PC-3 (cell line): ENCODE measurements at regions of chr9 and their contacts with region 1.

Region 1: DNA sequence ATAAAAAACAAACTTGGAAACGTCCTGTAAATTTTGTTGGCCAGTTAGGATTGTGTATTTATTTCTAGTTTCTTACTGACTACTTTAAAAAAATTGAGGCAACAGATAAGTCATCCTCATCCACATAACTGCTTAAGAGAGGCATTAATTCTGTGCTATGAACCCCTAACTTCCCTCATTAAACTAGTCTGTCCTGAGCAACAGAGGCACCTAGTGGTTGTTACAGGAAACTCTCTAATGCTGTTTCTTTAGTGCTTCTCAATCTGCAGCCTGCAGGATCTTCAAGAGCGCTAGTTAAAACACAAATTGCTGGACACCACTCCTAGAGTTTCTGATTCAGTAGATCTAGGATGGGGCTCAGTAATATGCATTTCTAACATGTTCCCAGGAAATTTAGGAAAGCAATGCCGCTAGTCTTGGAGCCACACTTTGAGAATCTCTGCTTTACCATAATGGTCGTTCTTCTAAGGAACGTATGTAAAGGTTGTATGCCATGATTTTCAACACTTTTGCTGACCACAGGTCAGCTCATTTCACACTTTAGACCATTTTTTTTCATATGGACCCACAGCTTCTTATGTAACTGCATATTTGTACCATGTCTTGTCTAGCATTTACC is 410.1 kb upstream of the SMARCA2 start:
- DNase-seq: peak; percentile 51
- ATAC-seq: no peak; the same call in 1 of the 2 replicates
- H3K4me3 ChIP-seq: no peak overlapping the region
- H3K27ac ChIP-seq: no peak overlapping the region
- H3K4me1 ChIP-seq: no peaks in the 10 kb centered on the region
- H3K27me3 ChIP-seq: no peaks in the 10 kb centered on the region
- CTCF ChIP-seq: peak; percentile 71

Region 2: GRCh38 chr9:1443450-1443849 is 161.6 kb before region 1 on chr9:
- CTCF ChIA-PET with region 1: no interaction called
- POLR2A ChIA-PET with region 1: no interaction called
- intact Hi-C with region 1: no loop called
- DNase-seq: no peak
- ATAC-seq: no peak
- H3K4me3 ChIP-seq: no peak overlapping the region
- H3K27ac ChIP-seq: no peak overlapping the region
- H3K4me1 ChIP-seq: no peaks in the 10 kb centered on the region
- H3K27me3 ChIP-seq: no peaks in the 10 kb centered on the region
- CTCF ChIP-seq: no peak

Region 3: GRCh38 chr9:1460143-1460769 is 144.8 kb before region 1 on chr9:
- CTCF ChIA-PET with region 1: no interaction called
- POLR2A ChIA-PET with region 1: no interaction called
- intact Hi-C with region 1: loop called (anchors 5 kb)
- DNase-seq: peak; percentile 47
- ATAC-seq: no peak
- H3K4me3 ChIP-seq: no peak overlapping the region
- H3K27ac ChIP-seq: no peak overlapping the region
- H3K4me1 ChIP-seq: peaks cover 19% of the 10 kb centered on the region
- H3K27me3 ChIP-seq: peaks cover 3% of the 10 kb centered on the region; the same call in 1 of the 2 replicates
- CTCF ChIP-seq: peak; percentile 69

Region 4: DNA sequence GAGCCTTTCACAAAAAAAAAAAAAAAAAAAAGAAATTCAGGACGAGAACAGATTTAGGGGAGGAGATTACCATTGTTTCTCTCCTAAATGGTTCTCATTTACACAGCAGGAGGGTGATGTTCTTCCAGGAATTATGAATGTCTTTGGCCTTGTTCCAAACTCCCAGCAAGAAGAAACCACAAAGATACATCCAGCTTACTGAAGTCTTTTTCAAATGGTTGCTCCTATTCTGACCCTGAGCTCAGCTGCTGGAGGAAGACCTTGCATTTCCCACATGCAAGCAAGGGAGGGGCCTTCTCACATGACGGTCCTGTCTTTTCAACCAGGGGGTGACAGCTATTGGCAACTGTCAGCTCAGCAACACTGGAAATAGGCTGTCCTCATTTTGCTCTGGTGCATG is 813.6 kb after region 1 on chr9:
- CTCF ChIA-PET with region 1: no interaction called
- POLR2A ChIA-PET with region 1: no interaction called
- intact Hi-C with region 1: no loop called
- DNase-seq: no peak
- ATAC-seq: no peak
- H3K4me3 ChIP-seq: no peak overlapping the region
- H3K27ac ChIP-seq: no peak overlapping the region
- H3K4me1 ChIP-seq: no peaks in the 10 kb centered on the region
- H3K27me3 ChIP-seq: peaks cover 17% of the 10 kb centered on the region
- CTCF ChIP-seq: no peak